ENCODE measurements at regions of chr7 and their contacts with region 1.

Region 1: GRCh38 chr7:123494193-123494796 is 40.1 kb downstream of the IQUB start:
- H3K4me3 ChIP-seq: no peak overlapping the region
- H3K27ac ChIP-seq: no peak overlapping the region
- H3K4me1 ChIP-seq: no peaks in the 10 kb centered on the region
- CTCF ChIP-seq: no peak

Region 2: GRCh38 chr7:123367484-123368122 is 126.7 kb before region 1 on chr7:
- CTCF ChIA-PET with region 1: interaction called, 10 read pairs
- POLR2A ChIA-PET with region 1: no interaction called
- H3K4me3 ChIP-seq: no peak overlapping the region
- H3K27ac ChIP-seq: no peak overlapping the region
- H3K4me1 ChIP-seq: no peaks in the 10 kb centered on the region
- CTCF ChIP-seq: 0 out of 2 replicates have a peak, but pooled peaks have one; percentile 10

Region 3: GRCh38 chr7:123472750-123473445 is 21.4 kb before region 1 on chr7:
- CTCF ChIA-PET with region 1: interaction called, 10 read pairs
- POLR2A ChIA-PET with region 1: no interaction called
- H3K4me3 ChIP-seq: no peak overlapping the region
- H3K27ac ChIP-seq: no peak overlapping the region
- H3K4me1 ChIP-seq: no peaks in the 10 kb centered on the region
- CTCF ChIP-seq: no peak

Region 4: DNA sequence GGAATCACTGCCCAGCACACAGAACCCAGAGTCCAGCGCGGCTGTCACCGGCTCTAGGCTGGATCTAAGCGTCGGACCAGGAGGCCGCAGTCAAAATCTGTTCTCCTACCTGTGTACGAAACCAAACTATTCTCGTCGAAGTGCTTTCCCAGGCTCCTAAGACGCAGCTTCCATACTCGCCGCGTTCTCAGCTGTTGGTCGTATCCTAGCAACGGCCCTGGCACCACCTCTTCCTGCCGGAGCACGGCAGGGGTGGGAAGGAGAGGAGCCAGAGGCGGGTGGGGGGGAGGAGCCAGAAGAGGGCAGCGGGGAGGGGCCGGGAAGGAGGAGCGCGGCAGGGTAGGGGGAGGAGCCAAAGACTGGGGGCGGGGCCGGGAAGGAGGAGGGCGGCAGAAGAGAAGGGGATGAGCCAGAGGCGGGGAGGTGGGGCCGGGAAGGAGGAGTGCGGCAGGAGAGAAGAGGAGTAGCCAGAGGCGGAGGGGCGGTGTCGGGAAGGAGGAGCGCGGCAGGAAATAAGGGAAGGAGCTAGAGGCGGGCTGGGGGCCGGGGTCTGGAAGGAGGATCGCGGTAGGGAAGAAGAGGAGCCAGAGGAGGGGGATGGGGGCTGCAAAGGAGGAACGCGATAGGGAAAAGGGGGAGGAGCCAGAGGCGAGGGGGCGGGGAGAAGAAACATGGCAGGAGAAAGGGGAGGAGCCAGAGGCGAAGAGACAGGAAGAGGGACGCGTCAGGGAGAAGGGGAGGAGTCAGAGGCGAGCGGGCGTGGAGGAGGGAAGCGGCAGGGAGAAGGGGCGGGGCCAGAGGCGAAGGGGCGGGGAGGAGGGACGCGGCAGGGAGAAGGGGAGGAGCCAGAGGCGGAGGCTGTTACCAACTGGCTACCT is 40.3 kb after region 1 on chr7 and contains the start of gene IQUB:
- CTCF ChIA-PET with region 1: interaction called, 17 read pairs
- POLR2A ChIA-PET with region 1: interaction called, 7 read pairs
- H3K4me3 ChIP-seq: peak within 1 kb of the TSS; percentile 80
- H3K27ac ChIP-seq: peak within 1 kb of the TSS; percentile 38; the same call in 1 of the 2 replicates
- H3K4me1 ChIP-seq: no peaks in the 10 kb centered on the region
- CTCF ChIP-seq: no peak

Region 5: GRCh38 chr7:123580406-123581161 is 86.3 kb after region 1 on chr7:
- CTCF ChIA-PET with region 1: interaction called, 11 read pairs
- POLR2A ChIA-PET with region 1: no interaction called
- H3K4me3 ChIP-seq: no peak overlapping the region
- H3K27ac ChIP-seq: no peak overlapping the region
- H3K4me1 ChIP-seq: no peaks in the 10 kb centered on the region
- CTCF ChIP-seq: peak; percentile 77

Region 6: DNA sequence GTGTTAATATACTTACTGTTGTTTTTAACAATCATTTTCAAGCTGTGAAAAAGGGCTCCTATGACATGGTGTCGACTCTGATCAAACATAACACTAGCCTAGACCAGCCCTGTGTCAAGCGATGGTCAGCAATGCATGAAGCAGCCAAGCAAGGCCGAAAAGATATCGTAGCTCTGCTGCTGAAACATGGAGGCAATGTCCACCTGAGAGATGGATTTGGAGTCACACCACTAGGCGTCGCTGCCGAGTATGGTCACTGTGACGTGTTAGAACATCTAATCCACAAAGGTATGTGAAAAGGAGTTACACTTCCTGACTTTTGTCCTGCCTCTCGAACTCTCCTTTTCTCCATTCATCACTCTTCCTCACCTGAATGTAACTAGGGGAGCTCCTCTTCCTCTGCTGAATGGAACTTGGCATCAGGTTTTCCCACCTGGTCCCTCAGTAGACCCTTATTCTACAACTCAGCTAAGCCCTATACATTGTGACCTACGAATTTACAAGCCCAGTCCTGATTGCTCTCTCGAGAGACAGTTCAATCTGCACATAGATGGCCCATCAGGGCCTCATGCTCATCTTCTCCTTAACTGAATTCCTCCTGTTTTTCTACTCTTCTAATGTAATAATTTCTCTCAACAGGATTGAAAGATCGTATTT is 130.4 kb after region 1 on chr7:
- CTCF ChIA-PET with region 1: interaction called, 12 read pairs
- POLR2A ChIA-PET with region 1: no interaction called
- H3K4me3 ChIP-seq: no peak overlapping the region
- H3K27ac ChIP-seq: no peak overlapping the region
- H3K4me1 ChIP-seq: 0 out of 2 replicates have a peak, but pooled peaks cover 4% of the 10 kb centered on the region
- CTCF ChIP-seq: peak; percentile 26; the same call in 1 of the 2 replicates

Region 7: DNA sequence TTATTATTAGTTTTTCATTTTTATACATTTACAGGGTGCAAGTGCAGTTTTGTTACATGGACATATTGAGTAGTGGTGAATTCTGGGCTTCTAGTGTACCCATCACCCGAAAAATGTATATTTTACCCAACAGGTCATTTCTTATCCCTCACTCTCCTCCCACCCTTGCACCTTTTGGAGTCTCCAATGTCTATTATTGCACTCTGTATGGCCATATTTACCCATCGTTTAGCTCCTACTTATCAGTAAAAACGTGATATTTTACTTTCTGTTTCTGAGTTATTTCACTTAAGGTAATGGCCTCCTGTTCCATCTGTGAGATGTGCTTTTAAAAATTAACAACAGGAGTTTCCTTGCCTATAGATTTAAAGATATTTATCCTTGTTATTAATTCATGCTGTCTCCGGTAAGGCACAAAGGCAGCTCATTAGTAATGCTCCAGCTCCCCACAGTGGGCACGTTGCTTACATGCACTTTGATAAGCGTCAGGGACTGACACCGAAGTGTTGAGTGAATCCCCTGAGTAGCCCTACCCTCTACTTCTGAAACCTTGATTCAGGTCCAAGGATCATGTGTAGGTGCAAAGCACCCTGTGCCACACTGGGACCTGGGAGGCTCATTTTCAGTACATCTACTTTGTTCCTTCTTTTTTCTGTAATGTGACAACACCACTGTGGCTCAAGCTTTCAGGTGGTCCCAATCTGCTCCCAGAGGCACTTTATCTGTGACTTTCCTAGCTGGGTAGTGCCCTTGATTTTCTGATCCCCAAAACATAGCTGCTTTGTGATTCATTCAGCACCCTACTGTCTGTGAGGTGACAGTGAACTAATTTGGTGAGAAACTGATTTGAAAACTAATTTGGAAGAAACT is 377.9 kb after region 1 on chr7:
- CTCF ChIA-PET with region 1: interaction called, 15 read pairs
- POLR2A ChIA-PET with region 1: no interaction called
- H3K4me3 ChIP-seq: no peak overlapping the region
- H3K27ac ChIP-seq: no peak overlapping the region
- H3K4me1 ChIP-seq: no peaks in the 10 kb centered on the region
- CTCF ChIP-seq: peak; percentile 63